ENCODE measurements at regions of chr1 and their contacts with region 1.

Region 1: DNA sequence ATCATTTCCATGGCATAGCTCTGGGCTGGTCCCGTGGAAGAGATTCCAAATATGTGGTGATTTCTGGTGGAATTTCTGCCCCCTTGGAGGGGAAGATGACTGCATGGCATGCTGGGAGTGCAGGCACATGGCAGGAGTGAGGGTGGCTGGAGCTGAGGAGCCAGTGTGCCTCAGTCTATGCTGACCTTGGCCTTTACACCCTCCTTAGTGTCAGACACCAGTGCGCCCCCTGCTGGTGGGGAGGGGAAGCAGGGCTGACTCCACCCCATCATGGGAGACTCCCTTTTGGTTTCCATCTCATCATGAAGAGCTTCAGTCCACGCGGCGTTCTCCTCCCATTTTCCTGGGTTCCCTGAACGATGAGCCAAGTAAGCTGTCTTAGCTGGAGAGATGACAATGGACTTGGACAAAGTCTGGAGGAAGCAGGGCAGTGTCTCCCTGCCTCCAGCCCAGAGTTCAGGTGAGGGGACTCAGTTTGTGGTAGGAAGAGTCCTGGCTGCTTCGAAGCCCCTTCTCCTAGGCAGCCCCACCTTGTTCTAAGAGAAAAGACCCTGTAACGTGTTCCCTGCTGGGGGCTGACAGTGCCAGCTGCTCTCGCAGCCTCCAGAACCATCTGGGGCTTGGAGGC is 10.3 kb downstream of the ALX3 start:
- DNase-seq: peak; percentile 80
- ATAC-seq: peak; percentile 74
- H3K4me3 Mint-ChIP-seq: no peak overlapping the region
- H3K27ac Mint-ChIP-seq: no peak overlapping the region
- H3K4me1 Mint-ChIP-seq: peaks cover 7% of the 10 kb centered on the region
- H3K27me3 Mint-ChIP-seq: peaks cover 2% of the 10 kb centered on the region

Region 2: GRCh38 chr1:109947582-109948286 is 112.4 kb before region 1 on chr1:
- CTCF ChIA-PET with region 1: no interaction called
- POLR2A ChIA-PET with region 1: no interaction called
- DNase-seq: no peak
- ATAC-seq: no peak
- H3K4me3 Mint-ChIP-seq: no peak overlapping the region
- H3K27ac Mint-ChIP-seq: no peak overlapping the region
- H3K4me1 Mint-ChIP-seq: peaks cover 6% of the 10 kb centered on the region
- H3K27me3 Mint-ChIP-seq: peaks cover 4% of the 10 kb centered on the region

Region 3: GRCh38 chr1:110047471-110047870 is 12.7 kb before region 1 on chr1:
- CTCF ChIA-PET with region 1: interaction called, 29 read pairs
- POLR2A ChIA-PET with region 1: no interaction called
- DNase-seq: no peak
- ATAC-seq: no peak
- H3K4me3 Mint-ChIP-seq: no peak overlapping the region
- H3K27ac Mint-ChIP-seq: no peak overlapping the region
- H3K4me1 Mint-ChIP-seq: no peaks in the 10 kb centered on the region
- H3K27me3 Mint-ChIP-seq: no peaks in the 10 kb centered on the region

Region 4: GRCh38 chr1:110082477-110082876 is 22.3 kb after region 1 on chr1:
- CTCF ChIA-PET with region 1: interaction called, 14 read pairs
- POLR2A ChIA-PET with region 1: no interaction called
- DNase-seq: no peak
- ATAC-seq: no peak
- H3K4me3 Mint-ChIP-seq: no peak overlapping the region
- H3K27ac Mint-ChIP-seq: no peak overlapping the region
- H3K4me1 Mint-ChIP-seq: peaks cover 13% of the 10 kb centered on the region
- H3K27me3 Mint-ChIP-seq: peaks cover 58% of the 10 kb centered on the region

Region 5: GRCh38 chr1:110106013-110106941 is 46.1 kb after region 1 on chr1:
- CTCF ChIA-PET with region 1: interaction called, 47 read pairs
- POLR2A ChIA-PET with region 1: no interaction called
- DNase-seq: peak; percentile 70
- ATAC-seq: peak; percentile 77
- H3K4me3 Mint-ChIP-seq: no peak overlapping the region
- H3K27ac Mint-ChIP-seq: no peak overlapping the region
- H3K4me1 Mint-ChIP-seq: no peaks in the 10 kb centered on the region
- H3K27me3 Mint-ChIP-seq: peaks cover 8% of the 10 kb centered on the region